ENCODE measurements at regions of chr19 and their contacts with region 1.

Region 1: GRCh38 chr19:18788529-18789421 is 2.3 kb downstream of the COMP start:
- DNase-seq: no peak
- ATAC-seq: no peak
- H3K4me3 ChIP-seq: no peak overlapping the region
- H3K27ac ChIP-seq: no peak overlapping the region
- H3K4me1 ChIP-seq: no peaks in the 10 kb centered on the region
- H3K27me3 ChIP-seq: peaks cover 27% of the 10 kb centered on the region
- CTCF ChIP-seq: no peak

Region 2: GRCh38 chr19:18776736-18777135 is 12.0 kb before region 1 on chr19:
- CTCF ChIA-PET with region 1: no interaction called
- POLR2A ChIA-PET with region 1: interaction called, 34 read pairs
- intact Hi-C with region 1: no loop called
- DNase-seq: peak; percentile 54
- ATAC-seq: peak; percentile 19; the same call in 1 of the 2 replicates
- H3K4me3 ChIP-seq: no peak overlapping the region
- H3K27ac ChIP-seq: peak overlapping the region; percentile 11; the same call in 1 of the 2 replicates
- H3K4me1 ChIP-seq: peaks cover 15% of the 10 kb centered on the region
- H3K27me3 ChIP-seq: no peaks in the 10 kb centered on the region
- CTCF ChIP-seq: no peak

Measured in PC-3 (cell line).